ENCODE measurements at regions of chr11 and their contacts with region 1.

Region 1: DNA sequence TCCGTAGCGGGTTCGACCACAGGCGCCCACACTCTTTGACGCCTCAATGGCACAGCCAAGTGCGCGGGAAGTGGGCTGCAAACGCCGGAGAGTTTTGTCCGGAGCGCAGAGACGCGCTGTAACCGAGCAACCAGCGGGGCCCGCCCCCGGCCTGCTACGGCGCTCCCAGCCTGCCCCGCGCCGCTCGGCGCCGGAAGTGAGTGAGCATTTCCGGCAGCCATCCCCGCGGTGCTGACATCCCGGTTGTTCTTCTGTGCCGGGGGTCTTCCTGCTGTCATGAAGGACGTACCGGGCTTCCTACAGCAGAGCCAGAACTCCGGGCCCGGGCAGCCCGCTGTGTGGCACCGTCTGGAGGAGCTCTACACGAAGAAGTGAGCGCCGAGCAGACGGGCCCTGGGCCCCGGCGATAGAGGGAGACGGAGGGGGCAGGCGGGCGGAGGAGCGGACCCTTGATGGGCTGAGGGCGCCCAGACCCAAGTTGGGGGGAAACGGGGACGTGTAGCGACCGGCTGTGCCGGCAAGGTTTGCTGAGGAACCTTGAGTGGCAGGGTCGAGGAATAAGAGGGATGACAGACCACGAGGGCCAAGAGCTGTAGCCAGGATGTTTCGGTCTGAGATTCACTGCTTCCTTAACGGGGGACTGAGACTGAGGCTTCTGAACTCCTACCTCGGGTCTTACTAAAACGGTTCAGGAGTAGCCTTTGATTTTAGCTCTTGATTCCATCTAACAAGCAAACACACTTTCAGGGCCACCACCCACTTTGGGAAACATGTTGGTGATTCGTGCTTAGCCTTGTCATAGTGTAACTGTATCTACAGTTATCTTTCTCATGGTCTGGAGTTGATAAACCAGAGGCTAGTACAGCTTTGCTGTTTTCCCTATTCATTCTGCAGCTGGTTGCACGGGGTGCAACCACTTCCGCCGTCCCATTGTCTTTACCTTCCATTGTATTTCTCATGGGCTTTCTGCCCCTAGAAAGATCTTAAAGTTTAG is at the start of gene PSMD13:
- DNase-seq: peak; percentile 66
- ATAC-seq: peak; percentile 95
- H3K4me3 ChIP-seq: peak within 1 kb of the TSS; percentile 77 to 94 (median 91)
- H3K27ac ChIP-seq: peak within 1 kb of the TSS; percentile 95
- H3K4me1 ChIP-seq: peaks cover 34% of the 10 kb centered on the region
- H3K27me3 ChIP-seq: no peaks in the 10 kb centered on the region; a peak in 1 of 5 replicates
- CTCF ChIP-seq: 0 out of 2 replicates have a peak, but pooled peaks have one; percentile 9
- EP300 ChIP-seq: no peak
- POLR2A ChIP-seq: peak; percentile 13 to 65; a peak in 3 of 4 replicates
- RAD21 ChIP-seq: 0 out of 2 replicates have a peak, but pooled peaks have one; percentile 27
- total RNA-seq, gene PSMD13: 117 and 172 TPM in 2 replicates

Region 2: DNA sequence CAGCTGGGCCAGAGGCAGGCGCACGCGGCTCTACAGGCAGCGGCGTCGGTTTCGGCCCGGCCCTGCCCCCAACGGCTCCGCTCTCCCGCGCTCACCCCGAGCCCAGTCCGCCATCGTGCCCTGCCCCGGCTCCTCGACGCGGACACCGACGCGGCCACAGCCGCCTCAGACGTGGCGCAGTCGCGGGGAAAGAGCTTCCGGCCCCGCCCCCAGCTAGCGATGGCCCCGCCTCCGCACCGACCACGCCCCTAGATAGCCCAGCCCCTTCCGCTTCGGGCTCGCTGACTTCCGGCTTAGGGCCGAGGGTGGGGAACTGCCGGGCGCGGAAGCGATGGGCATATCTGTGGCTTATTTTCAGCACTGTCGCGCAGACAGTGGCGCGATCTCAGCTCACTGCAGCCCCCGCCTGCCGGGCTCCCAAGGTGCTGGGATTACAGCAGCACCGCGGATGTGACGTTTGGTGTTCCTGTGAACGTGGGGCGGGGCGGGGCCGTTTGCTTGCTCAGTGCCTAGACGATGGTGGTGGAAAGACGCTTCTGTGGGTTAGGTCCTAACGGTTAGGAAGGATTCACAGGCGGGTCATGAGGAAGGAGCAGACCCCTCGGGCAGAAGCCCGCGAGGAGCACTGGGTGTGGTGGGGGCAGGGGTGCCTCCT is 29.7 kb before region 1 on chr11 and contains the starts of genes BET1L and RIC8A:
- CTCF ChIA-PET with region 1: no interaction called
- POLR2A ChIA-PET with region 1: interaction called, 20 read pairs
- in situ Hi-C with region 1: no loop called
- intact Hi-C with region 1: loop called (anchors 2 kb)
- DNase-seq: peak; percentile 95
- ATAC-seq: peak; percentile 74
- H3K4me3 ChIP-seq: peak within 1 kb of the TSS; percentile 75 to 90 (median 89)
- H3K27ac ChIP-seq: peak within 1 kb of the TSS; percentile 96
- H3K4me1 ChIP-seq: peaks cover 36% of the 10 kb centered on the region
- H3K27me3 ChIP-seq: no peaks in the 10 kb centered on the region; a peak in 1 of 5 replicates
- CTCF ChIP-seq: peak; percentile 6; the same call in 1 of the 2 replicates
- EP300 ChIP-seq: no peak
- POLR2A ChIP-seq: peak in 1 of 2 experiments; percentile 79; a peak in 2 of 4 replicates
- RAD21 ChIP-seq: peak; percentile 60
- total RNA-seq, gene BET1L: 26.2 and 27.3 TPM in 2 replicates
- total RNA-seq, gene RIC8A: 62.1 and 65.0 TPM in 2 replicates

Region 3: DNA sequence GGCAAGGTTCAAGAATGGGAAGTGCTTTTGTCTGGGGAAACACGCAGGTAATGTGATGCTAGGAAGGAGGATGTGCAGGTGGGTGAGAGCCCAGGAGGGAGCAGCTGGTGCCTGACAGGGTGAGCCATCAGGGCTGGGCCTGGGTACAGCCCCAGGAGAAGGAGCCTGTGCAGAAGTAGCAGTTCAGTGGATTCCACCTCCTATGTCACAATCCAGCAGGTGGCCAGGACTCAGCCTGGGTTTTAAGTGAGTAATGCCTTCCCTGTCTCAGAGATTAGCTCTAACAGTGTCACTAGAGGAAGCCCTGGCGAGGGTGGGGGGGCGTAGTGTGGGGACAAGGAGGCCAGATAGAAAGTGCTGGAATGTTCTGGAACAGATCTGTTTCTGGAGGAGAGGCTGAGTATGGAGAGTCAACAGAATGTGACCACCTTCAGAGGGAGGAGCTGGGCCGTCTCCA is 21.5 kb before region 1 on chr11:
- CTCF ChIA-PET with region 1: no interaction called
- POLR2A ChIA-PET with region 1: interaction called, 12 read pairs
- in situ Hi-C with region 1: no loop called
- intact Hi-C with region 1: no loop called
- DNase-seq: no peak
- ATAC-seq: peak; percentile 12; the same call in 2 of the 3 replicates
- H3K4me3 ChIP-seq: no peak overlapping the region
- H3K27ac ChIP-seq: no peak overlapping the region
- H3K4me1 ChIP-seq: peaks cover 26% of the 10 kb centered on the region
- H3K27me3 ChIP-seq: no peaks in the 10 kb centered on the region
- CTCF ChIP-seq: no peak
- EP300 ChIP-seq: no peak
- POLR2A ChIP-seq: peak in 1 of 2 experiments; percentile 35; a peak in 1 of 4 replicates
- RAD21 ChIP-seq: no peak

Region 4: DNA sequence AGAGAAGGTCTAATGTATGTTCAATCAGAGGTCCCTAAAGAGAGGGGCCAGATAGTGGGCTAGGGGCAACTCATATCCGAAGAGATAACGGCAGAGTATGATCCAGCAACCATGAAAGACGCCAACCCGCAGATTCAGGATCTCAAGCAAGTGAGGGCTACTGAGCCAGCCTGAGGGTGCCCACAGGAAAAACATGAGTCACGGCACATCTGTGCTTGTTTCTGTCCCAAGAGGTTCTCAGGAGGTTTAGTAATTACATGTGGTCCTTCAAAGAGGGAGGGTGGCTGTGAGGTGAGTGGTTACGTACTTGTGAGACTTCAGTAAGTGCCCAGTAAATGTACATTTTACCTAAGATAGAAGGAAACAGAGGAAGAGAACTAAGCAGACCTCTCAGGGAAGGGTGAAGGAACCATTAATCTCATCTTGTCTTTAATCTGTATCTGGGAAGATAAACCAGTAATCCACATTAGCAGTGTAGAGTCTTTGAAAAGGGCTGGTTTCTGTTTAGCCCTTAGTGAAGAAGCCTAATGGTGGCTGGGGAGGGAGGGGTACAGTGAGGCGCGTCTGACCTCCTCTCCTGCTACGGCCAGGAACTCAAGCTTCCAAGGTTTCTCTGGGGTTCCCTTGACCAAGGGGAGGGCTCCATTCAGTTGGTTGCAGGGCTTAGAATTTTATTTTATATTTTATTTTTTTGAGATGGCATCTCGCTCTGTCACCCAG is 11.2 kb before region 1 on chr11:
- CTCF ChIA-PET with region 1: no interaction called
- POLR2A ChIA-PET with region 1: no interaction called
- in situ Hi-C with region 1: no loop called
- intact Hi-C with region 1: no loop called
- DNase-seq: no peak
- ATAC-seq: no peak
- H3K4me3 ChIP-seq: no peak overlapping the region
- H3K27ac ChIP-seq: no peak overlapping the region
- H3K4me1 ChIP-seq: no peaks in the 10 kb centered on the region
- H3K27me3 ChIP-seq: no peaks in the 10 kb centered on the region; a peak in 1 of 5 replicates
- CTCF ChIP-seq: no peak
- EP300 ChIP-seq: no peak
- POLR2A ChIP-seq: no peak
- RAD21 ChIP-seq: no peak